Mucosa of descending colon (tissue), 3 donors: ENCODE measurements at regions of chr18 and their contacts with region 1.

Region 1: DNA sequence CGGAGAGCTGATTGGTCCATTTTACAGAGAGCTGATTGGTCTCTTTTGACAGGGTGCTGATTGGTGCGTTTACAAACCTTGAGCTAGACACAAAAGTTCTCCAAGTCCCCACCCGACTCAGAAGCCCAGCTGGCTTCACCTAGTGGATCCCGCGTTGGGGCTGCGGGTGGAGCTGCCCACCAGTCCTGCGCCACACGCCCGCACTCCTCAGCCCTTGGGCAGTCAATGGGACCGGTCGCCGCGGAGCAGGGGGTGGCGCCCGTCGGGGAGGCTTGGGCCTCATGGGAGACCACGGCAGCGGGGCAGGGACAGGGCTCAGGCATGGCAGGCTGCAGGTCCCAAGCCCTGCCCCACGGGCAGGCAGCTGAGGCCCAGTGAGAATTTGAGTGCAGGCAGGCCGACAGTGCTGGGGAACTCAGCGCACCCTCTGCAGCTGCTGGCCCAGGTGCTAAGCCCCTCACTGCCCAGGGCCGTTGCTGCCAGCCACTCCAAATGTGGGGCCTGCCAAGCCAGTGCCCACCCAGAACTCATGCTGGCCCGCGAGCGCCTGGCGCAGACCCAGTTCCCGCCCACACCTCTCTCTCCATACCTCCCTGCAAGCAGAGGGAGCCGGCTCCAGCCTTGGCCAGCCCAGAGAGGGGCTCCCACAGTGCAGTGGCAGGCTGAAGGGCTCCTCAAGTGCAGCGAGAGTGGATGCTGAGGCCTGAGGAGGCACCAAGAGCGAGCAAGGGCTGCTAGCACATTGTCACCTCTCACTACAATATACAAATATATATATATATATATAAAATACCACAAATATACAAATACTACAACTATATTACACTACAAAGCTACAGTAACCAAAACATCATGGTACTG is 100.7 kb downstream of the SPIRE1 start:
- DNase-seq: no peak
- ATAC-seq: no peak
- H3K4me3 ChIP-seq: no peak overlapping the region
- H3K4me1 ChIP-seq: no peaks in the 10 kb centered on the region
- CTCF ChIP-seq: no peak

Region 2: DNA sequence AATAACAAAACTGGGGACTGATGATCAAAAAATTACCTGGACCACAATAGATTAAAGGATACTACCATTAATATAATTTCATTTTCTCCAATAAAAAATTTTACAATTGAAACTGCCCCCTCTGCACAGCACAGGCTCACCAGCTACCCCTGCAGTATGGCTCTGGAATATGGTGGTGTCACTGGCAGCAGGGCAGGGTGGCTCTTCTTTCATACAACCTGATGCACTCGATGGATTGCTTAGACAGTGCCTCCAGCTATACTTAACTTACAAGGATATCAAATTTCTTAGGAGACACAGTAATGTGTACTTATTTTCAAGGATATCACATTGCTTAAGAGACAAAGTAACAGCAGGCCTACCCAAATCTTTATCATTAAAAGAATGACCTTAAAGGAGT is 25.4 kb before region 1 on chr18:
- intact Hi-C with region 1: loop called in 1 of 2 experiments (anchors 2 kb)
- DNase-seq: no peak
- ATAC-seq: no peak
- H3K4me3 ChIP-seq: no peak overlapping the region
- H3K4me1 ChIP-seq: no peaks in the 10 kb centered on the region
- CTCF ChIP-seq: no peak